Activated CD8-positive, alpha-beta T cell treated with anti-CD3 and anti-CD28 coated beads for 36 hours (primary cell): ENCODE measurements at regions of chr18 and their contacts with region 1.

Region 1: DNA sequence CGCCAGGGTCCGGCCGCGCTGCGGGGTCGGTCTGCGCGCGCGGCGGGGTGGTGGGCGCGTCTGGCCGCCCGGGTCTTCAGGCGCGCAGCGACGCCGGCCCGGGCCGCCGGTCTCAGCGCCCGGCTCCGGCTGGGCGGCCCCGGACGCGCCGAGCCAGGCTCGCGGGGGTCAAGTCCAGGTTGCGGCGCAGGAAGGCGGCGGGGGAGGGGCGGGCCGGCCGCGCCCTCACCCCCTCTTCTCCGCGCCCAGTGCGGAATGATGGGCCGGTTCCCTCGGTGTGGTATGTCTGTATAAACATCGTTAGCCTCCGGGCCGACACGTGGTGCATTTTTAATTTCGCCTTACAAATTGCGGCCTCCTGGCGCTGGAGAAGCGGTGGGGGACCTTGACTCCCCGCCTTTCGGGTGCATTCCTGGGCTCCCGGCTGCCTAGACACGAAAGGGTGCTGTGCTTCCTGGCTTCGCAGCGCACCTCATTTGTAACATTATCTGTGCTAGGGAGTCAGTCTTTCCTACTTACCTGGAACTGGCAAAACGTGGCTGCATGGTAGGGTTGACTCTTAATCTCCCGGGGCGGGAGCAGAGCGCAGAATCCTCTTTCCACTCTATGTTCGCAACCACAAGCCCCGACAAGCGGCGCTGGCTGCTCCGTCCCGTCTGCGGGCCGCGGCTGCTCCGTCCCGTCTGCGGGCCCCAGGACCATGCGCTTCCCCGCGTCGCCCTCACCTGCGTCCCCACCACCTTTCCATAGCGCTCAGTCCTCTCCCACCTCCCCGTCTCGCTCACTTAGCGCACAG is 69.0 kb downstream of the CTAGE1 start:
- DNase-seq: peak; percentile 33
- ATAC-seq: peak; percentile 6
- H3K4me3 Mint-ChIP-seq: peak overlapping the region; percentile 78
- H3K27ac Mint-ChIP-seq: peak overlapping the region; percentile 87
- H3K4me1 Mint-ChIP-seq: peaks cover 41% of the 10 kb centered on the region
- H3K27me3 Mint-ChIP-seq: peaks cover 23% of the 10 kb centered on the region
- CTCF ChIP-seq: no peak

Region 2: DNA sequence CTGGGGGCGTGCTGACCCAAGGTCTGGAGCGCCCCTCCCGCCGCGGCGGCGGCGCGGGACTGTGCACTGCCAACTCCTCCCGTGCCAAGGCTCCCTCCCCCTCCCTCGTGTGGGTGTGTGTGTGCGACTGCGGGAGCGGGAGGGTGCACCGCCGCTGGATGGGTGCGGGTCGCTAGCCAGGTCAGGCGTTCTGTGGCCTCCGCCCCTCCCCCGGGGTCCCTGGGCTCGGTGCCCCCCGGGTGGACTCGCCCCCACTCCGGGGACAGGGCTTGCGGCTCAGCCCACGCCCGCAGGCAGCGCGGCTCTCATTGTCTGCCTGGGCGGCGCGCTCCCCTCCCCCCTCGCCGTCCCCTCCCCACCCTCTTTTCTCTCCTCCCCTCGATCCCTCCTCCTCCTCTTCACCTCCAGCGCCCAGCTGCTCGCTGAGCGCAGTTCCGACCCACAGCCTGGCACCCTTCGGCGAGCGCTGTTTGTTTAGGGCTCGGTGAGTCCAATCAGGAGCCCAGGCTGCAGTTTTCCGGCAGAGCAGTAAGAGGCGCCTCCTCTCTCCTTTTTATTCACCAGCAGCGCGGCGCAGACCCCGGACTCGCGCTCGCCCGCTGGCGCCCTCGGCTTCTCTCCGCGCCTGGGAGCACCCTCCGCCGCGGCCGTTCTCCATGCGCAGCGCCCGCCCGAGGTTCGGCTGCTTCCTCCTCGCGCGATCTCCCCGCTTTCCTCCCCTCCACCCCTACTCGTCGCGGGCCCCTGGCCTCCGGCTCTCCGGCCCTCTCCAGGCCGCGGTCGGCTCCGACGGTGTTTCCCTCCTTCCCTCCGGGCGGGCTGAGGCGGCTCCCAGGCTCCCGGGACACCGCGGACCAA is 179.5 kb before region 1 on chr18 and contains the start of gene GATA6:
- CTCF ChIA-PET with region 1: no interaction called
- POLR2A ChIA-PET with region 1: no interaction called
- intact Hi-C with region 1: loop called (anchors 10 kb)
- DNase-seq: peak; percentile 71
- ATAC-seq: peak; percentile 76
- H3K4me3 Mint-ChIP-seq: peak within 1 kb of the TSS; percentile 78
- H3K27ac Mint-ChIP-seq: no peak within 1 kb of the TSS
- H3K4me1 Mint-ChIP-seq: peaks cover 23% of the 10 kb centered on the region
- H3K27me3 Mint-ChIP-seq: peaks cover 74% of the 10 kb centered on the region
- CTCF ChIP-seq: peak; percentile 26
- total RNA-seq, gene GATA6: not detected